Posterior cingulate gyrus (tissue), 11 donors: ENCODE measurements at regions of chr12 and their contacts with region 1.

Region 1: DNA sequence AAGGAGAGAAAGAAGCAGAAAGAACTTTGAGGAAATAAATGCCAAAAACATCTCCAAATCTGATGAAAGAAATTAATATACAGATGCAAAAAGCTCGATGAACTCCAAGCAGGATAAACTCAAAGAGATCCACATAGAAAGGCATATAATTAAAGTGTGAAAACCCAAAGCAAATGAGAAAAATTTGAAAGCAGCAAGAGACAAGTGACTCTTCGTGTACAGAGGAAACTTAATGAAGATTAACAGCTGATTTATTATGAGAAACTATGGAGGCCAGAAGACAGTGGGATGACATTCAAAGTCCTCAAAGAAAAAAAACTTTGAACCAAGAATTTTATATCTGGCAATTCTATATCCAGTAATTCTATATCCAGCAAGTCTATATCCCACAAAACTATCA is 163.0 kb upstream of the TMCC3 start:
- DNase-seq: no peak

Region 2: GRCh38 chr12:94875525-94875924 is 62.2 kb after region 1 on chr12:
- intact Hi-C with region 1: loop called (anchors 10 kb)
- DNase-seq: no peak